Activated T-helper 2 cell treated with anti-CD3 and anti-CD28 coated beads, Interferon-gamma antibody, Interleukin-2, Interleukin-4, amounts not matched to agents 10 μg/mL and 5 μg/mL and 100 μg/mL, durations not matched to agents 14 hours and 24 hours and 36 hours (primary cell): ENCODE measurements at regions of chr5 and their contacts with region 1.

Region 1: DNA sequence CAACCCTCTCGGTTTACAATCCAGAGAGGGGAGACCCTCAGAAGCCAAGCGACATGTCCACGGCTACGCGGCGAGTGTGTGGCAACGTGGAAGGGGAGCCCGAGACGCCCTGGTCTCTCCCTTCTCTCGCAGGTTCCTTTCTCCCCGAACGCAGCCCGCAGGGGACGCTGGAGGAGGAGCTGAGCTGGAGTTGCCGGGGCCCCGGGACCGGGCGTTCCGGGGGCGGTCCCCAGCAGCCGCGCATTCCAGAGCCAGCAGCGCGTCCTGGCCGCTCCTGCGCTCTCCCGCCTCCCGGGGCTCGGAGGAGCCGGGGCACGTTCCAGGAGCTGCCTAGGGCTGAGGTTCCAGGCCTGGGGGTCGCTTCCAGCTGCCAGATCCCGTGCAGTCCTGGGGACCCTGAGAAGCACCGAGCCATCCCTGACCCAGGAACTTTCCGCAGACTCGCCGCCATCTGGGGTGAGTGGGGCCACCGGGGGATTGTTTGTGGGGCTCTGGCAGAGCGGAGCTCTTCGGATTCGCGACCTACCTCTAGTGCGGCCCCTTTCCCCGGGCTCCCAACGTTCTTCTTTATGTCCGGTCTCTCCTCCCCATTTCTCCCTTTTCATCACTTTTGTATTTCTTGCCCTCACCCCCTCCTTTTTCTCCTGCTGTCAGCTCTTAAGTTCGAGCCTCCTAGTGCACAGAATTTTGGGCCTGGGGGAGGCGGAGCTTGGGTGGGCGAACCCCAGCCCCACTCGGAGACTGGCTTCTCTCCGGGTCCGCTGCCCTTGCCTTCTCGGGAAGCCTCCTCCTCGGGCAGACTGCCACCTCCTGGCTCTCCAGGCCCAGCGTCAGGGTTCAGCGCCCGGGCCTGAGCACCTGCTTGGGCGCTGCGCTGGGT is at the start of gene SMIM3:
- DNase-seq: peak; percentile 58
- H3K4me3 Mint-ChIP-seq: peak within 1 kb of the TSS; percentile 100
- H3K27ac Mint-ChIP-seq: peak within 1 kb of the TSS; percentile 95
- H3K4me1 Mint-ChIP-seq: peaks cover 64% of the 10 kb centered on the region
- H3K27me3 Mint-ChIP-seq: no peaks in the 10 kb centered on the region
- total RNA-seq, gene SMIM3: 24.5 and 25.7 TPM in 2 replicates

Region 2: GRCh38 chr5:150560401-150561193 is 218.2 kb before region 1 on chr5:
- intact Hi-C with region 1: loop called (anchors 5 kb)
- DNase-seq: peak; percentile 65
- H3K4me3 Mint-ChIP-seq: no peak overlapping the region
- H3K27ac Mint-ChIP-seq: no peak overlapping the region
- H3K4me1 Mint-ChIP-seq: no peaks in the 10 kb centered on the region
- H3K27me3 Mint-ChIP-seq: no peaks in the 10 kb centered on the region

Region 3: DNA sequence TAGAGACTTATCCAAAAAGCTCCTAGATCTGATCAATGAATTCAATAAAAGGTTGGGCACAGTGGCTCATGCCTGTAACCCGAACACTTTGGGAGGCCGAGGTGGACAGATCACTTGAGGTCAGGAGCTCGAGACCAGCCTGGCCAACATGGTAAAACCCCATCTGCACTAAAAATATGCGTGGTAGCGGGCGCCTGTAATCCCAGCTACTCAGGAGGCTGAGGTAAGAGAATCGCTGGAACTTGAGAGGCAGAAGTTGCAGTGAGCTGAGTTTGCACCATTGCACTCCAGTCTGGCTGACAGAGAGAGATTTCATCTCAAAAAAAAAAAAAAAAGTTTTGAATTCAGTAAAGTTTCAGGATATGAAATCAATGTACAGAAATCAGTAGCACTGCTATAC is 39.9 kb before region 1 on chr5:
- intact Hi-C with region 1: loop called (anchors 2 kb)
- DNase-seq: no peak
- H3K4me3 Mint-ChIP-seq: no peak overlapping the region
- H3K27ac Mint-ChIP-seq: peak overlapping the region; percentile 54
- H3K4me1 Mint-ChIP-seq: peaks cover 73% of the 10 kb centered on the region
- H3K27me3 Mint-ChIP-seq: no peaks in the 10 kb centered on the region

Region 4: DNA sequence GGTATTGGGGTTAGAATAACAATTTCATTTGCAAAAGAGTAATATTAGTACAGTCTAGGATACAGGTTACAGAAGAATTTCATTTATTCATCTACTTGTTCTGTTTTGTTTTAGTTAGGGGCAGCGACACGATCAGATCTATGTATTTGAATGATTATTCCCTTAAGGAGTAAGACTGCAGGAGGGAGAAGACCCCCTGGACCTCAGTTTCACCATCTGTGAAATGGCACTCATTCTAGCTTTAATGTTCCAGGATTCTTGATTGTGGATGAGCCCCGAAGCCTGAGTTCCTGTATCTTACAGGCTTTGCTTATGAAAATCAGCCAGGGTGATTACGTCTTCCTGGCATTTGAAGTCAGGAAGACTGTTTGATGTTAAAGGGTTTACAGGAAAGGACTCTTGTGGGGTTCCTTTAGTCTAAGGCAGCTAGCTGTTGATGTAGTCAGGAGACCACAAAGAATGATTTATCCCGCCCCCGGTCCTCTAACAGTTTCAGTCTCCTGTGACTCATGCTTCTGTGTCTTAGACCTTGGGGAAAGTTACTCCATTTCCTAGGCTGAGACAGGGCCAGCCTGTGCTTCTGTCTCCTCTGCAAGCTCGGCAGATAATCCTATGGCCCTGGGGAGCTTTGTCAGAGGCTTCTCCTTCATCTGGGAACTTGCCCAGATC is 11.3 kb after region 1 on chr5:
- intact Hi-C with region 1: loop called (anchors 1 kb)
- DNase-seq: peak; percentile 49
- H3K4me3 Mint-ChIP-seq: peak overlapping the region; percentile 49
- H3K27ac Mint-ChIP-seq: peak overlapping the region; percentile 87
- H3K4me1 Mint-ChIP-seq: peaks cover 44% of the 10 kb centered on the region
- H3K27me3 Mint-ChIP-seq: no peaks in the 10 kb centered on the region

Region 5: GRCh38 chr5:151080623-151081430 is 302.1 kb after region 1 on chr5 and contains the start of gene TNIP1:
- intact Hi-C with region 1: loop called (anchors 5 kb)
- DNase-seq: peak; percentile 93
- H3K4me3 Mint-ChIP-seq: peak within 1 kb of the TSS; percentile 99
- H3K27ac Mint-ChIP-seq: peak within 1 kb of the TSS; percentile 87
- H3K4me1 Mint-ChIP-seq: peaks cover 76% of the 10 kb centered on the region
- H3K27me3 Mint-ChIP-seq: no peaks in the 10 kb centered on the region
- total RNA-seq, gene TNIP1: 473 and 477 TPM in 2 replicates

Region 6: GRCh38 chr5:151150471-151151262 is 371.9 kb after region 1 on chr5:
- intact Hi-C with region 1: loop called (anchors 2 kb)
- DNase-seq: peak; percentile 69
- H3K4me3 Mint-ChIP-seq: peak overlapping the region; percentile 59
- H3K27ac Mint-ChIP-seq: peak overlapping the region; percentile 86
- H3K4me1 Mint-ChIP-seq: peaks cover 78% of the 10 kb centered on the region
- H3K27me3 Mint-ChIP-seq: no peaks in the 10 kb centered on the region